ENCODE measurements at regions of chr1 and their contacts with region 1.

Region 1: GRCh38 chr1:45583264-45583665 is 576 bp upstream of the NASP start:
- DNase-seq: peak; percentile 85 to 98 (median 93)
- ATAC-seq: peak; percentile 72
- H3K4me3 ChIP-seq: peak overlapping the region; percentile 82 to 98
- H3K4me3 Mint-ChIP-seq: peak overlapping the region; percentile 92
- H3K27ac ChIP-seq: peak overlapping the region; percentile 86 to 89
- H3K27ac Mint-ChIP-seq: peak overlapping the region; percentile 98
- H3K4me1 ChIP-seq: peaks cover 23% of the 10 kb centered on the region
- H3K4me1 Mint-ChIP-seq: peaks cover 27% of the 10 kb centered on the region
- H3K27me3 ChIP-seq: no peaks in the 10 kb centered on the region
- H3K27me3 Mint-ChIP-seq: no peaks in the 10 kb centered on the region
- CTCF ChIP-seq: no peak

Region 2: DNA sequence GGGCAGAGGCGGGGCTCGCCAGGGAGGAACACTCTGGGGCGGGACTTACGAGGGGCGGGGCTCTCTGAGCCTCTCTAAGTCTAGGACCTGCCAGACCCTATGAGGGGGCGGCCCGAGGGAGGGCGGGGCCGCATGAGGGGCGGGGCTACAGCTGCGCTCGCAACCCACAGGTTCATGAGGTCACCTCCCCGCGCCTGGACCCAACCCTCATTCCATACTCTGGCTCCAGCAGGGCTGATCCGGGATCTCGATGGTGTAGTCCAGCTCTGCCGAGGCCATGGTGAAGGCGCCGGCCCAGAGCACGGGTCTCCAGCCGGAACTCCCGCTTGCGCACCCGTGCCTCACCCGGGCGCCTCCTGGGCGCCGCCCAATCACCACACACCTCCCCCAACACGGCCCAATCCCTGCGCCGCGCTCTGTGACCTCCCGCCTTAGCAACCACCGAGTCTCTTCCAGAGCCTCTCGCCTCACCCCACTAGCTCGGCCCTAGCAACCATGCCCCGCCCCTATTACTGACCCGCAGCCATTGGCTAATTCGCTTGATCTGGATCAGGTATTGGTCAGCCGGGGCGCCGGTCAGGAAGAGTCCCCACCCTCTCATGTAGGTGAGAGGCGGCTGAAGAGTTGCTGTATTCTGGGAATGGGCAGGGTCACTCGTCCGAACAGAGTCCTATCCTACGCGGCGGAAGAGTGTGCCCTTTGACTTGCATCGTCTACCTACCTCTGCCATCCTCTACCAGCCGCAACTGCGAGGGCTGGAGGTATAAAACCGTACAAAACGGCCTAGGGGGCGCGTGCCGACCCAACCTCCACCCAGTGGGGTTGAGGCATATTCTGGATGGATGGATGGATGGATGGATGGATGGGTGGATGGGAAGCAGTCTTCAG is 908.9 kb before region 1 on chr1 and contains the starts of genes ARMH1 and TMEM53:
- CTCF ChIA-PET with region 1: no interaction called
- POLR2A ChIA-PET with region 1: no interaction called
- intact Hi-C with region 1: loop called in 1 of 2 experiments (anchors 1 kb)
- DNase-seq: peak; percentile 91 to 98 (median 96)
- ATAC-seq: peak; percentile 91
- H3K4me3 ChIP-seq: peak within 1 kb of the TSS; percentile 76 to 88
- H3K4me3 Mint-ChIP-seq: peak within 1 kb of the TSS; percentile 94
- H3K27ac ChIP-seq: peak within 1 kb of the TSS; percentile 81 to 82
- H3K27ac Mint-ChIP-seq: peak within 1 kb of the TSS; percentile 91
- H3K4me1 ChIP-seq: peaks cover 12% of the 10 kb centered on the region
- H3K4me1 Mint-ChIP-seq: peaks cover 25% of the 10 kb centered on the region
- H3K27me3 ChIP-seq: no peaks in the 10 kb centered on the region
- H3K27me3 Mint-ChIP-seq: no peaks in the 10 kb centered on the region
- CTCF ChIP-seq: no peak
- total RNA-seq, gene ARMH1: 117 to 128 TPM
- total RNA-seq, gene TMEM53: 1.2 TPM in 1 of 2 experiments, not detected in the other

Region 3: GRCh38 chr1:44799770-44800584 is 783.3 kb before region 1 on chr1 and contains the start of gene PLK3:
- CTCF ChIA-PET with region 1: no interaction called
- POLR2A ChIA-PET with region 1: no interaction called
- intact Hi-C with region 1: loop called in 1 of 2 experiments (anchors 10 kb)
- DNase-seq: peak; percentile 97 to 99 (median 98)
- ATAC-seq: peak; percentile 83
- H3K4me3 ChIP-seq: peak within 1 kb of the TSS; percentile 79 to 95
- H3K4me3 Mint-ChIP-seq: peak within 1 kb of the TSS; percentile 87
- H3K27ac ChIP-seq: peak within 1 kb of the TSS; percentile 91 to 98
- H3K27ac Mint-ChIP-seq: peak within 1 kb of the TSS; percentile 98
- H3K4me1 ChIP-seq: peaks cover 29% of the 10 kb centered on the region
- H3K4me1 Mint-ChIP-seq: peaks cover 37% of the 10 kb centered on the region
- H3K27me3 ChIP-seq: no peaks in the 10 kb centered on the region
- H3K27me3 Mint-ChIP-seq: no peaks in the 10 kb centered on the region
- CTCF ChIP-seq: peak; percentile 81
- total RNA-seq, gene PLK3: 568 to 599 TPM

Region 4: GRCh38 chr1:45339789-45340570 is 243.3 kb before region 1 on chr1 and contains the starts of genes MUTYH and TOE1:
- CTCF ChIA-PET with region 1: no interaction called
- POLR2A ChIA-PET with region 1: interaction called, 12 read pairs
- intact Hi-C with region 1: loop called (anchors 1 kb)
- DNase-seq: peak; percentile 79 to 94 (median 89)
- ATAC-seq: peak; percentile 81
- H3K4me3 ChIP-seq: peak within 1 kb of the TSS; percentile 88 to 94
- H3K4me3 Mint-ChIP-seq: peak within 1 kb of the TSS; percentile 98
- H3K27ac ChIP-seq: peak within 1 kb of the TSS; percentile 97 to 99
- H3K27ac Mint-ChIP-seq: peak within 1 kb of the TSS; percentile 97
- H3K4me1 ChIP-seq: peaks cover 35% of the 10 kb centered on the region
- H3K4me1 Mint-ChIP-seq: peaks cover 50% of the 10 kb centered on the region
- H3K27me3 ChIP-seq: no peaks in the 10 kb centered on the region
- H3K27me3 Mint-ChIP-seq: no peaks in the 10 kb centered on the region
- CTCF ChIP-seq: no peak
- total RNA-seq, gene MUTYH: 53.0 to 62.5 TPM
- total RNA-seq, gene TOE1: 53.8 to 56.5 TPM

Region 5: DNA sequence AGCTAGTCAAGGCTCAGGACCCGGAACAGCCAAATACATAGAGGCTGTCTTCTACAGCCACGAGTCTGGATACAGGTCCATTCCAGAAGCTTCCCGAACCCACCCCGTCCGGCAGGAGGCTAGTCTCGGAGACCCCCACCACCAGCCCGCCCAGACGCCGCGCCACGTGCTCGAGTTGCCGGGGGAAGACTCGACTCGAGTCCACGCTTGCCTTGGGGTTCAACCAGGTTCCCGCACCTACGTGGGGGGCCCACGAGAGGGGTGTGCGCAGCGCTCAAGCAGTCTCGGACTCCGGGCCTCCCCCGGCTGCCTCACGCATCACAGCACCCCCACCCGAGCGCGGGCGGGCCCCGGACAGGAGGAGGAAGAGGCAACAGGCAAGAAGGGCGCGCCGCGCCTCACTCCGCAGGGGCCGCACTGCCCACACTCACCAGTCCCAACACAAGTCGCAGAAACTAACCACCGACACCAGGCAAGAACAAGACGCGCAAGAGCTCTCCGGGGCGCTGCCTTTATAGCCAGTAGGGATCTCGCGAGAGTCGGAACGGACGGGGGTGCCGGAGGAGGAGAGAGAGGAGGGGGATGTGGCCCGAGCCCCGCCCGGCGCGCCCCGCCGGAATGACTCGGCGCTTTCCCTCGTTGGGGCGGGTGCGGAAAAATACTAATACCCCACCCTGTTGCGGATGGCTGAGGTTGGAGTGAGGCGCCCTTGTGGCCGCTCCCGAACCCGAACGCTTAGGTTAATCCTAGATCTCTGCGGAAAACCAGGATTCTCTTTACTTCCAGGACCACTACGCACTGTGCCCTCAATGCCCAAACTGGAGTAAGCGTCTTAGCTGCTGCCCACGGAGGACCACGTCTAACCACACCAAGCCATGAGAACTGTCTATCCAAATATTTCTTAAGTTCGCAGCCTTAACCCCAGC is 61.6 kb before region 1 on chr1 and contains the start of gene PRDX1:
- CTCF ChIA-PET with region 1: no interaction called
- POLR2A ChIA-PET with region 1: interaction called, 19 read pairs
- intact Hi-C with region 1: loop called in 1 of 2 experiments (anchors 1 kb)
- DNase-seq: peak; percentile 90 to 98 (median 93)
- ATAC-seq: peak; percentile 90
- H3K4me3 ChIP-seq: peak within 1 kb of the TSS; percentile 86 to 99
- H3K4me3 Mint-ChIP-seq: peak within 1 kb of the TSS; percentile 94
- H3K27ac ChIP-seq: peak within 1 kb of the TSS; percentile 75 to 78
- H3K27ac Mint-ChIP-seq: peak within 1 kb of the TSS; percentile 90
- H3K4me1 ChIP-seq: peaks cover 15% of the 10 kb centered on the region
- H3K4me1 Mint-ChIP-seq: peaks cover 26% of the 10 kb centered on the region
- H3K27me3 ChIP-seq: peaks cover 0 to 3% of the 10 kb centered on the region in 2 experiments
- H3K27me3 Mint-ChIP-seq: no peaks in the 10 kb centered on the region
- CTCF ChIP-seq: no peak
- total RNA-seq, gene PRDX1: 20.4 to 27.0 TPM

Region 6: DNA sequence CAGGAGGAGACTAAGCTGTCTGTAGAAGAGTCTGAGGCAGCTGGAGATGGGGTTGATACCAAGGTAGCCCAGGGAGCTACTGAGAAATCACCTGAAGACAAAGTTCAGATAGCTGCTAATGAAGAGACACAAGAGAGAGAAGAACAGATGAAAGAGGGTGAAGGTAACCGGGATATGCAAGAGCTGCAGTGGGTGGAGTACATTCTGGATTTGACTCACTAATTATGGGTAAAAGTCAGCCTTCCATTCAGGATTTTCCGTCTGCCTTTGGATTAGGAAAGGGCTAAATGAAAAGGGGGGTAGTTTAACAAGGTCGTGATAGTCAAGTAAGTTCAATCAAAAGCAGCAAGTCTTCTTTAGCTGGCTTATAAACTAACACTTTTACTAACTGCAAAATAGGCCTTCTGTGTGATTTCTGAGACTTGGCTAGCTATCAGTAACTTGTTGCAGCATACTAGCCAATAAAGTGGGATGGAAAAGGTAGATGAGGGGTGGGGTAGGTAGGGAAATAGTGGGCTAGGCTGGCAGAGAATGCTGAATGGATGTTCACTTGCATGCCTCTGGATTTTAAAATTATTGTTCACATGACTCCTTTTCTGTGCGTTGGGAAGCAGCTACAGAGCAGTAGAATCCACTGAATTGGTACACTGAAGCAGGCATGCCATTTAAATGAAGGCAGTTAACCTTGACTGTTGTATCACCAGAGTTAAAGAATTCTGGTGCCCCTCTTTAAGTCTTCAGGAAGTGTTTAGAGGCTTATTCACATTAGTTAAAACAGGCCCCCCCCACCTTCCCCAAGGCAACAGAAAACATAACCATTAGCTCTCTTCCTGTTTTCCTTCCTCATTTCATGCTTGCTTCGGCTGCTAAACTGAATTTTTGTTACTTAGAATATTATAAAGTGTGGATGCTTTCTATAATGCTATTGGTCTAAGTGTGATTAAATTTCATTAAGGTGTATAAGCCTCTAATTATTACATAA is 25.2 kb after region 1 on chr1:
- CTCF ChIA-PET with region 1: no interaction called
- POLR2A ChIA-PET with region 1: no interaction called
- intact Hi-C with region 1: loop called in 1 of 2 experiments (anchors 1 kb)
- DNase-seq: no peak
- ATAC-seq: no peak
- H3K4me3 ChIP-seq: no peak overlapping the region
- H3K4me3 Mint-ChIP-seq: no peak overlapping the region
- H3K27ac ChIP-seq: no peak overlapping the region
- H3K27ac Mint-ChIP-seq: peak overlapping the region; percentile 73
- H3K4me1 ChIP-seq: no peaks in the 10 kb centered on the region
- H3K4me1 Mint-ChIP-seq: peaks cover 30% of the 10 kb centered on the region
- H3K27me3 ChIP-seq: no peaks in the 10 kb centered on the region
- H3K27me3 Mint-ChIP-seq: no peaks in the 10 kb centered on the region
- CTCF ChIP-seq: no peak

Region 7: DNA sequence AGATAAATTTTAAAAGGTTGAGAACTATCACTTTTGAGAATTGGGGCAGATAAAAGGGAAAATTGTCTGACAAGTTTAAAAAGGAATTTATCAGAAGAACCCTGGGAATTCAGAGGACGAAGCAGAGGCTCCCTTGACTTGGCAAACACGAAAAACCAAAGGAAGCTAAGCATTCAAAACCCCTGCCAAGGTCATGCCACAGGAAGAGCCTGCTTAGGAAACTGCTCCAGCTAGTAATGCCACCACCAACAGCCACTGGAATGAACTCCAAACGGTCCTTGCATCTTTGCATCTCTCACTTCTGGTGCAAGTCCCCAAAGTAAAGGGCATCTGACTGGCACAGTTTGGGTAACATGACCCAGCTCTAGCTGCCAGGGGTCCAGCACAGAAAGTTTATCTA is 95.9 kb after region 1 on chr1:
- CTCF ChIA-PET with region 1: no interaction called
- POLR2A ChIA-PET with region 1: no interaction called
- intact Hi-C with region 1: no loop called
- DNase-seq: no peak
- ATAC-seq: no peak
- H3K4me3 ChIP-seq: no peak overlapping the region
- H3K4me3 Mint-ChIP-seq: peak overlapping the region; percentile 10
- H3K27ac ChIP-seq: no peak overlapping the region
- H3K27ac Mint-ChIP-seq: no peak overlapping the region
- H3K4me1 ChIP-seq: peaks cover 45% of the 10 kb centered on the region
- H3K4me1 Mint-ChIP-seq: peaks cover 81% of the 10 kb centered on the region
- H3K27me3 ChIP-seq: no peaks in the 10 kb centered on the region
- H3K27me3 Mint-ChIP-seq: no peaks in the 10 kb centered on the region
- CTCF ChIP-seq: no peak

Measured in CD8-positive, alpha-beta T cell (primary cell).